Naive thymus-derived CD4-positive, alpha-beta T cell (primary cell): ENCODE measurements at regions of chr9 and their contacts with region 1.

Region 1: GRCh38 chr9:127388037-127388855 is 8.7 kb upstream of the SLC2A8 start:
- DNase-seq: peak; percentile 67 to 97 (median 94)
- ATAC-seq: peak; percentile 98
- H3K4me3 ChIP-seq: no peak overlapping the region
- H3K4me3 Mint-ChIP-seq: peak overlapping the region; percentile 16 to 73 (median 55)
- H3K27ac ChIP-seq: no peak overlapping the region
- H3K27ac Mint-ChIP-seq: peak overlapping the region; percentile 19 to 94 (median 82)
- H3K4me1 ChIP-seq: peaks cover 13 to 20% of the 10 kb centered on the region in 2 donors
- H3K4me1 Mint-ChIP-seq: peaks cover 23 to 44% (median 28%) of the 10 kb centered on the region in 7 donors
- H3K27me3 ChIP-seq: peaks cover 6 to 46% of the 10 kb centered on the region in 2 donors
- H3K27me3 Mint-ChIP-seq: peaks cover 65 to 78% (median 72%) of the 10 kb centered on the region in 5 donors

Region 2: GRCh38 chr9:127311239-127311741 is 77.0 kb before region 1 on chr9:
- CTCF ChIA-PET with region 1: no interaction called
- POLR2A ChIA-PET with region 1: no interaction called
- intact Hi-C with region 1: loop called in 1 of 2 experiments (anchors 5 kb)
- DNase-seq: peak in 5 of 9 donors; percentile 11 to 42 (median 26)
- ATAC-seq: no peak
- H3K4me3 ChIP-seq: no peak overlapping the region
- H3K4me3 Mint-ChIP-seq: no peak overlapping the region
- H3K27ac ChIP-seq: no peak overlapping the region
- H3K27ac Mint-ChIP-seq: no peak overlapping the region
- H3K4me1 ChIP-seq: no peaks in the 10 kb centered on the region
- H3K4me1 Mint-ChIP-seq: no peaks in the 10 kb centered on the region
- H3K27me3 ChIP-seq: peaks cover 0 to 4% of the 10 kb centered on the region in 2 donors
- H3K27me3 Mint-ChIP-seq: peaks cover 15 to 32% (median 31%) of the 10 kb centered on the region in 5 donors